Left ventricle myocardium inferior (tissue), 1 donor: ENCODE measurements at regions of chr11 and their contacts with region 1.

Region 1: DNA sequence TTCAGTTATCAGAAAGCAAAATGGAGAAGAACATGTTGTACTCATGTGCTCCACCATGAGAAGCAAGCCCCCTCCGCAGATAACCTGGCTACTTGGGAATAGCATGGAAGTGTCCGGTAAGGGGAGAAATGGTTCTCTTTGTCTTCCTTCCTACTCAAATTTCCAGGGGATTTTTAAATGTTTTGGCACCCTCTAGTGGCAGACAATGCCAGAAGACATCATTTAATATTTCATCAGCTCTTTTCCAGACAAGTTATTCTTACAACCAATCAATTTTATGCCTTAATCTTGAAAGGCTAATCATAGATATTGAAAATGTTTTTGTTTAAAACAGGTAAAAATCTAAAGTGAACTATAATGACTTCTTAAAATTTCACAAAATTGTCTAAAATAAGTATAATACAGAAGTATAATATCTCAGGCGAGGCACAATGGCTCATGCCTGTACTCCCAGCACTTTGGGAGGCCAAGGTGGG is 15.7 kb downstream of the CRTAM start:
- DNase-seq: no peak
- H3K4me3 ChIP-seq: no peak overlapping the region
- H3K27ac ChIP-seq: no peak overlapping the region
- H3K4me1 ChIP-seq: no peaks in the 10 kb centered on the region
- H3K27me3 ChIP-seq: peaks cover 57% of the 10 kb centered on the region
- CTCF ChIP-seq: peak; percentile 78

Region 2: DNA sequence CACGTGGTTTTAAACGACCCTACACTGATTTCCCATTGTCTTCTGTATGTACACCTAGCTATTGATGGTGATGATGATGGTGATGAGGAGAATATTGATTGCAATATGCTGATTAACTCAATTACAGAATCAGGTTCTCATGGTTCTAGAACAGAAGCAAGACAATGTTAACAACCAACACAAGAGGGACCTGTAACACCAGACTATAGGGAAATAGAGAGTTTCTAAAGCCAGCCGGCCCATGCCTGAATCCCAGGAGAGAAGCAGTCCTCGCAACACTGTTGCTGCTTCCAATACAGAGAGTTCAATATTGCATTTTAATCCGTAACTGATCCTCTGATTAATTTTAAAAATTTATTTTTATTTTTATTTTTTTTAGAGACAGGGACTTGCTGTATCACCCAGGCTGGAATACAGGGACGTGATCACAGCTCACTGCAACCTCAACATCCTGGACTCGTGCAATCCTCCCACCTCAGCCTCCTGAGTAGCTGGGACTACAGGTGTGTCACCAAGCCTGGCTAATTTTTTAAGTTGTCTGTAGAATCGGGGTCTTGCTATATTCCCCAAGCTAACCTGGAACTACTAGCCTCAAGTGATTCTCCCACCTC is 220.7 kb before region 1 on chr11:
- intact Hi-C with region 1: loop called (anchors 5 kb)
- DNase-seq: peak; percentile 16
- H3K4me3 ChIP-seq: no peak overlapping the region
- H3K27ac ChIP-seq: no peak overlapping the region
- H3K4me1 ChIP-seq: peaks cover 3% of the 10 kb centered on the region
- H3K27me3 ChIP-seq: peaks cover 34% of the 10 kb centered on the region
- CTCF ChIP-seq: peak; percentile 65

Region 3: GRCh38 chr11:122796128-122796717 is 57.8 kb before region 1 on chr11:
- intact Hi-C with region 1: loop called (anchors 2 kb)
- DNase-seq: peak; percentile 42
- H3K4me3 ChIP-seq: no peak overlapping the region
- H3K27ac ChIP-seq: no peak overlapping the region
- H3K4me1 ChIP-seq: no peaks in the 10 kb centered on the region
- H3K27me3 ChIP-seq: no peaks in the 10 kb centered on the region
- CTCF ChIP-seq: peak; percentile 84